PC-9 (cell line): ENCODE measurements at regions of chrX and their contacts with region 1.

Region 1: DNA sequence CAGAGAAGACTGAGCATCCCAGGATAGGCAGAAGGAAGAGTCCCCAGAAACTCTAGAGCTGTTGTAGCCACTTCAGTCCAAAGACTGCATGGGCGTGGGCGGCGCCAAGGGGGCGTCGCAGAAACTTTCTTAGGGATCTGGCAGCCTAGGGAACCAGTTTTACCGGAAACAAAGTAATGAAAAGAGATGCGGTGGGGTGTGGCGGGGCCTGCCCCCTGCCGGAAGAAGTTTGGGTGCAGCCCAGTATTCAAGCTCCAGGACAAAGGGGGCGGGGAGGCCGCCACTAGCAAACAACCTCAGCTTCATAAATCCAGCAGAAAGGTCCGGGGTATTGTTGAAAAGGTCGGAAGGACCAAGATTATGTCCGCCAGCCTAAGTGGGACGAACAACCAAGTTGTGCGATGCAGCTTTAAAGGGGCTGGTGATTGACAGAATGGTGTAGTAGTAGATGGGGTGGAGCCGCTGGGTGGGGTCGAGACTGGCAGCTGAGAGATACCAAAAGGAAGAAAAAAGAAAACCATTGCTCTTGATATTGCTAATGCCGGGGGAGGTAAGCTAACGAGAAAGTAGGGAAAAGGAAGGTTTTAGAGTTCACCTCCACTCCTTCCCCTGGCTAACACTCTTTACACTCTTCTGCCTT is 190.5 kb downstream of the RRAGB start:
- DNase-seq: peak; percentile 72 to 78
- H3K4me3 ChIP-seq: peak overlapping the region; percentile 84
- H3K27ac ChIP-seq: peak overlapping the region; percentile 69
- H3K4me1 ChIP-seq: peaks cover 14% of the 10 kb centered on the region
- H3K27me3 ChIP-seq: no peaks in the 10 kb centered on the region
- CTCF ChIP-seq: peak; percentile 69

Region 2: DNA sequence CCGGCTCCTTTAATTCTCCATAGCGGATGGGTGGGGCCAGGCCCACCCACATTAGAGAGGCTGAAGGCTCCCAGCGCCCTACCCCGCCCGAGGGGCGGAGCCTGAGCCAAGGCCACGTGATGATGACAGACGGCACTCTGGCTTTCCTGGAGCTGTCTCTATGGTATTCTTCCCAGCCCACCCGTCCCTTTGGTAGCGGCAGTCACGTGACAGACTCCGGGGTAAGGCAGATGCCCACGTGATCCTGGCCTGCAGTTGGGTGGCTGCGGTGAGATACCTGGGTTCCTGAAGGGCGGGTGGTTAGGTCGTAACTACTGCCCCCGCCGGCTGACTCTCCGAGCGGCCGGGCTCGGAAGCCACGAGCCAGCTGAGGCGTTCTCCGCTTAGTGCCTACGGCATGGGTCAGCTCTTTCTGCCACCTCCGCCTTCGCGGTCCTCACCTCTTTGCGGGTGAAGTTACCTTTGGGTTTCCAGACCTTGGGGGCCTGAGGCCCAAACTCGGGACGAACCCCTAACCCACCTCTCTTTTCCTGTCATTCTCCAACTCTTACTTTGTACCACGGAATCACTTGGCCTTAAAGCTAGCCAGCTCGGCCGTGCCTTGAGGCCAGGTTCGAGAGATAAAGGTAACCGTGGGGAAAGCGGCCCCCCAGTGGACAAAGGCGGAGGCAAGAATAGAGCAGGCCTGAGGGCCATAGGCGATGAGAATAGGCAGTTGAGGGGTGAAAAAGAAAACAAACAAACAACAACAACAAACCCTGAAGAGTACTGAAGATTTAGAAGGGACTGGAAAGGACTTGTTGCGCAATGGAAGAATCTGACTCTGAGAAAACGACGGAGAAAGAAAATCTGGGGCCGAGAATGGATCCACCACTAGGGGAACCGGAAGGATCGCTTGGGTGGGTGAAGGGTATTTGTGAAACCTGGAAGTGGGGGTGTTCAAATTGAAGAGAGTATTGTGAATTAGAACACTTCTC is 190.3 kb before region 1 on chrX and contains the start of gene RRAGB:
- CTCF ChIA-PET with region 1: interaction called, 4 read pairs
- POLR2A ChIA-PET with region 1: interaction called, 3 read pairs
- intact Hi-C with region 1: loop called (anchors 1 kb)
- DNase-seq: peak; percentile 89 to 96
- H3K4me3 ChIP-seq: peak within 1 kb of the TSS; percentile 91
- H3K27ac ChIP-seq: peak within 1 kb of the TSS; percentile 86
- H3K4me1 ChIP-seq: peaks cover 11% of the 10 kb centered on the region; the same call in 1 of the 2 replicates
- H3K27me3 ChIP-seq: no peaks in the 10 kb centered on the region
- CTCF ChIP-seq: peak; percentile 69
- total RNA-seq, gene RRAGB: 18.6 and 23.3 TPM in 2 replicates

Region 3: DNA sequence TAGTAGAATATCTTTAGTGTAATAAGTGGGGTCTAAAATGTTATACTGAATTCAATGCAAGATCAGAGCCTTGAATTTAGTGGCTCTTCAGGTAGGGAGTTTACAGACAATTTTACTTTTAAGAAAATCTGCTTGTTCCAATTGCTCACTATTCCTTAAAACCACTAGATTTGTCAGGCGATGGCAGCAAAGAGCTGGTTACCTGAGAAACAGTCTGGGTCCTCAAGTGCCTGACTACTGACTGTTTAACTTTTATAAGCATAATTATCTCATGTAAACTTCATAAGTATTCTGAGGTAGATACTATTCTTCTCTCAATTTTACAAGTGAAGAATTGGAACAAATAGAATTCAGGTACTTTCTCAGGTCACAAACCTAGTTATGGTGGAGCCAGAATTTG is 106.3 kb before region 1 on chrX:
- CTCF ChIA-PET with region 1: no interaction called
- POLR2A ChIA-PET with region 1: interaction called, 3 read pairs
- intact Hi-C with region 1: loop called (anchors 10 kb)
- DNase-seq: no peak
- H3K4me3 ChIP-seq: no peak overlapping the region
- H3K27ac ChIP-seq: no peak overlapping the region
- H3K4me1 ChIP-seq: 0 out of 2 replicates have a peak, but pooled peaks cover under 1% of the 10 kb centered on the region
- H3K27me3 ChIP-seq: no peaks in the 10 kb centered on the region
- CTCF ChIP-seq: no peak; the same call in 1 of the 2 replicates

Region 4: DNA sequence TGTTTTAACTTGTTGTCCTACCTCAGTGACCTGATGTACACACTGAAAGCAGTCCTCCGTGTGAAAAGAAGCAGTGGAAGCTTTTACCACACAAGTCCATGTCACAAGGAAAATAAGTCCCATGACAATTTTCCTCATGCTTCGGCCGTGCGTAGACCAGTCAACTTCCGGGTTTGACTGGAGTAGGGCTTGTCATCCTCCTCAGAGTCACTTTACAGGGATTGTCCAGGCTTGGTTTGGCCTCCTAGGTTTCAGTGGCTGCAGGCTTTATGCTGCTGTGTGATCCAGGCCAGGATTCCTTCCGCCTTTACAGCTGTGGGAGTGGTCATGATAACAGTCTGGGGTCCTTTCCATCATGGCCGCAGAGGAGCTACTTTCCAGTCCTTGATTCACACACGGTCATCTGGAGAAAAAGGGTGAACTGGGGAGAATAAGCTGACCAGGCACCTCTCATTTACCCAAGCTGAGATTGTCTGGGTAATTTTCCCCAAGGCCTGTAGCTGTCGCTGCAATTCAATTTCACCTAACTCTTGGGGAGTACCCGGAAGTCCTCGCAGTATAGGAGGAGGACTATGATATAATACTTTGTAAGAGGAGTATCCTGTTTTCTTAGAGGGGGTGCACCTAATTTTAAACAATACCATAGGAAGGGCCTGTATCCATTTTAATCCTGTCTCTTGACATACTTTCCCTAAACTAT is 117.9 kb after region 1 on chrX:
- CTCF ChIA-PET with region 1: interaction called, 9 read pairs
- POLR2A ChIA-PET with region 1: no interaction called
- intact Hi-C with region 1: loop called (anchors 1 kb)
- DNase-seq: peak in 1 of 2 experiments; percentile 54
- H3K4me3 ChIP-seq: no peak overlapping the region
- H3K27ac ChIP-seq: no peak overlapping the region
- H3K4me1 ChIP-seq: peaks cover 29% of the 10 kb centered on the region
- H3K27me3 ChIP-seq: no peaks in the 10 kb centered on the region
- CTCF ChIP-seq: no peak